ENCODE measurements at regions of chr3 and their contacts with region 1.

Region 1: DNA sequence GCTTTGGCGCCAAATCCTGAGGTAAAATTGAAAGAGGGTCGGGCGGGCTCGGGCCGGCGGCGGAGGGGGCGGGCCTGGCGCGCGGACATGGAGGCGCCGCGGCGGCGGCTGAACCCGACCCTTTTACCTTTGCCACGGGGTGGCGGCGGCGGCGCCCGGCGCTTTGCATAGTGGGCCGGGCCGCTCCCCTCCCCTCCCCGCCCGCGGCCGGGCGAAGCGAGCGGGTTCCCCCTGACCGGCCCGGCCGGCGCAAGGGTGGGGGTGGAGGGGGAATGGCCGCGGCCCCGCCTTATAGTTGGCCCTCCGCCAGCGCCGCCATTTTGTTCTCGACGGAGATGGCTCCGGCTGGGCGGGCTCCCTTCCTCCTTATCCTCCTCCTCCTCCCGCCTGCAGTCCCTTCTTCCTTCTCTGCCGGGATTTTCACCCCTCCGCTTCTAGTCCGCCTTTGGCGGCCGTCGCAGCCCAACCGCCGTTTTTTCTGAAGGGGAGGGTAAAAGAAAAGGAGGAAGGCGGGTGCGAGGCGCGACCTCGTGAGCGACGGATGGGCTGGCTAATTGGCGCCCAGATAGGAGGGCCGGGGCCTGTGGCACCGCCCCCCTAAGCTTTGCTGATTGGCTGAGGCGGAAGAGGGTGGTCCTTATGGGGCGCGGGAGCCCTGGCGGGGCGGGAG is 638 bp downstream of the NR2C2 start:
- DNase-seq: peak; percentile 96
- H3K4me3 ChIP-seq: peak overlapping the region; percentile 48 to 87 (median 75)
- H3K27ac ChIP-seq: peak overlapping the region; percentile 99
- H3K4me1 ChIP-seq: peaks cover 38% of the 10 kb centered on the region
- H3K27me3 ChIP-seq: no peaks in the 10 kb centered on the region
- CTCF ChIP-seq: no peak
- POLR2A ChIP-seq: peak; percentile 53

Region 2: GRCh38 chr3:14144423-14145075 is 803.5 kb before region 1 on chr3:
- CTCF ChIA-PET with region 1: no interaction called
- POLR2A ChIA-PET with region 1: interaction called, 5 read pairs
- dilution Hi-C with region 1: no loop called
- intact Hi-C with region 1: loop called (anchors 10 kb)
- DNase-seq: peak; percentile 97
- H3K4me3 ChIP-seq: peak overlapping the region in 1 of 3 experiments; percentile 20
- H3K27ac ChIP-seq: peak overlapping the region; percentile 100
- H3K4me1 ChIP-seq: peaks cover 41% of the 10 kb centered on the region
- H3K27me3 ChIP-seq: no peaks in the 10 kb centered on the region
- CTCF ChIP-seq: no peak
- POLR2A ChIP-seq: peak; percentile 69

Region 3: GRCh38 chr3:14651440-14652251 is 296.4 kb before region 1 on chr3 and contains the start of gene CCDC174:
- CTCF ChIA-PET with region 1: no interaction called
- POLR2A ChIA-PET with region 1: no interaction called
- dilution Hi-C with region 1: no loop called
- intact Hi-C with region 1: loop called (anchors 1 kb)
- DNase-seq: peak; percentile 99
- H3K4me3 ChIP-seq: peak within 1 kb of the TSS; percentile 17 to 75 (median 61)
- H3K27ac ChIP-seq: peak within 1 kb of the TSS; percentile 40
- H3K4me1 ChIP-seq: peaks cover 16% of the 10 kb centered on the region
- H3K27me3 ChIP-seq: peaks cover 0 to 2% of the 10 kb centered on the region in 2 experiments
- CTCF ChIP-seq: no peak
- POLR2A ChIP-seq: peak; percentile 93
- total RNA-seq, gene CCDC174: 15.1 and 16.6 TPM in 2 replicates

Region 4: DNA sequence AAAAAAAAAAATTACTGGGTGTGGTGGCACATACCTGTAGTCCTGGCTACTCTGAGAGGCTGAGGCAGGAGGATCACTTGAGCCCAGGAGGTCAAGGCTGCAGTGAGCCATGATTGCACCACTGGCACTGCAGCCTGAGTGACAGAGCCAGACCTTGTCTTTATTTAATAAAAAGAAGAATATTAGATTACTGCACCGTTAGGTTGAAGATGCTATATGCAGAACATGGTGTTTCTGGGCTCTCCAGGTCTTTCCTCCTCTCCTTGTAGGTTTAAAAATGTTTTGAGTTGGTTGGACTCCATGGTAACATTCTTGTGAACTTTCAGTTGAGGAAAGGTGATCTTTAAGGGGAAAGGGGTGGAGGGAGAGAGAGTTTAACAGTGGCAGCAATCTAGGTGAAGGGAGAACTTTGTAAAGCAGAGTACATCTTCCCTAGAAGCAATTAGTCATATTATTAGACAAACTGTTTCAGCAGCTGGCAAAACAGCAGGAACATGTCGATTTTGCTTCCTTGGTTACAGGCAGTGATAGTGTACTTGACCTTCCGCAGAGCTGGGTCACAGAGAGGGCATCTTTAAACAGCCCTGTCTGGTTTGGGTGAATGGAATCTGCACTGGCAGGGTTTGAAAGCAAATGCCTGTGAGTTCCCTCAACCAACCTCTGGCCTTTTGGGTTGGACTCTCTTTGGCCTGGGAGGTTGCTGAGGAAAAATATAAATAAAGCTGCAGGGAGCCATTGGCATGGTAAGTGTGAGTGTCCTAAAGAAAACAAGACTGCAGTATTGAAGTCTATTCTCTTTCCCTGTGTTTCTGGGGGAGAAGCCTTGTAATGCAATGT is 42.1 kb after region 1 on chr3:
- CTCF ChIA-PET with region 1: interaction called, 3 read pairs
- POLR2A ChIA-PET with region 1: no interaction called
- dilution Hi-C with region 1: no loop called
- intact Hi-C with region 1: loop called (anchors 2 kb)
- DNase-seq: peak; percentile 43
- H3K4me3 ChIP-seq: no peak overlapping the region
- H3K27ac ChIP-seq: no peak overlapping the region
- H3K4me1 ChIP-seq: peaks cover 9% of the 10 kb centered on the region
- H3K27me3 ChIP-seq: no peaks in the 10 kb centered on the region
- CTCF ChIP-seq: no peak
- POLR2A ChIP-seq: no peak

Region 5: DNA sequence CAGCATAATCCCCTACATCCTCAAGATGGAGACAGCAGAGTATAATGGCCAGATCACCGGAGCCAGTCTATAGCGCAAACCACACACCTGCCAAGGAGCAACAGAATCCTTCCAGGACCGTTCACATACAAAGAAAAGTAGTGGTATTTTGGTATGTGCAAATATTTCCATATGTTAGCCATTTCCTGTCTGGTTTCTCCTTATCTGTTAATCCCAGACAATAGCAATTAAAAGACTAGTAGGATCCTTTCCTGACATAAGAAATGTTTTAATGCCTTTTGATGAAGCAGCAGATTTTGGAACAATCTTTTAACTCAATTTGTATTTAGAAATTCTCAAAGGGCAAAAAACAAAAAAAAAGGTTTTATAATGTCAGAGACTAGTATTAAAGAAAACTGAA is 94.9 kb after region 1 on chr3:
- CTCF ChIA-PET with region 1: no interaction called
- POLR2A ChIA-PET with region 1: no interaction called
- dilution Hi-C with region 1: no loop called
- intact Hi-C with region 1: loop called (anchors 2 kb)
- DNase-seq: peak; percentile 76
- H3K4me3 ChIP-seq: no peak overlapping the region
- H3K27ac ChIP-seq: peak overlapping the region; percentile 71
- H3K4me1 ChIP-seq: peaks cover 36% of the 10 kb centered on the region
- H3K27me3 ChIP-seq: no peaks in the 10 kb centered on the region
- CTCF ChIP-seq: no peak
- POLR2A ChIP-seq: no peak

Region 6: GRCh38 chr3:15064835-15065549 is 117.0 kb after region 1 on chr3 and contains the start of gene MRPS25:
- CTCF ChIA-PET with region 1: no interaction called
- POLR2A ChIA-PET with region 1: no interaction called
- dilution Hi-C with region 1: no loop called
- intact Hi-C with region 1: loop called (anchors 1 kb)
- DNase-seq: peak; percentile 96
- H3K4me3 ChIP-seq: peak within 1 kb of the TSS; percentile 40 to 71 (median 66)
- H3K27ac ChIP-seq: peak within 1 kb of the TSS; percentile 42
- H3K4me1 ChIP-seq: peaks cover 10% of the 10 kb centered on the region
- H3K27me3 ChIP-seq: no peaks in the 10 kb centered on the region
- CTCF ChIP-seq: no peak
- POLR2A ChIP-seq: peak; percentile 96
- total RNA-seq, gene MRPS25: 58.1 and 68.7 TPM in 2 replicates

Region 7: DNA sequence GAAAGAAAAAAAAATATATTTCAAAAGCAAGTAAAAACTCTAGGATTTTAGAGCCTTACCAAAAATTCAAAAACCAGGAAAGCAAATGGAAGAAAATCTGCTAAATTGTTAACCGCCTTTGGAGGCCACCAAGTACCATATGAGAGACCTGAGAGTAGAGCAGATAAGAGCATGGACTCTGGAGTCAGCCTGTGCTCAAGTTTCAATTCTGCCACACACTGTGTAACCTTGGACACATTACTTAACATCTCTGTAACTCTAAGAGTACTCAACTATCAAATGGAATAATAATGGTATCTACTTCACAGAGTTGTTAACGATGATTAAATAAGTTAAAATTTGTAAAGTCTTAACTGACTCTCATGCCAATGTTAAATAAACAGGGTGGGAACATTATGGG is 138.2 kb after region 1 on chr3:
- CTCF ChIA-PET with region 1: no interaction called
- POLR2A ChIA-PET with region 1: no interaction called
- dilution Hi-C with region 1: no loop called
- intact Hi-C with region 1: no loop called
- DNase-seq: no peak
- H3K4me3 ChIP-seq: no peak overlapping the region
- H3K27ac ChIP-seq: no peak overlapping the region
- H3K4me1 ChIP-seq: no peaks in the 10 kb centered on the region
- H3K27me3 ChIP-seq: no peaks in the 10 kb centered on the region
- CTCF ChIP-seq: no peak
- POLR2A ChIP-seq: no peak

Region 8: GRCh38 chr3:15098503-15099363 is 150.7 kb after region 1 on chr3 and contains the start of gene RBSN:
- CTCF ChIA-PET with region 1: no interaction called
- POLR2A ChIA-PET with region 1: no interaction called
- dilution Hi-C with region 1: no loop called
- intact Hi-C with region 1: loop called (anchors 1 kb)
- DNase-seq: peak; percentile 96
- H3K4me3 ChIP-seq: peak within 1 kb of the TSS; percentile 87 to 98 (median 89)
- H3K27ac ChIP-seq: peak within 1 kb of the TSS; percentile 45
- H3K4me1 ChIP-seq: peaks cover 13% of the 10 kb centered on the region
- H3K27me3 ChIP-seq: no peaks in the 10 kb centered on the region
- CTCF ChIP-seq: no peak
- POLR2A ChIP-seq: peak; percentile 69
- total RNA-seq, gene RBSN: 23.1 and 23.6 TPM in 2 replicates

Measured in endothelial cell of umbilical vein (primary cell).